CD8-positive, alpha-beta T cell (primary cell): ENCODE measurements at regions of chr14 and their contacts with region 1.

Region 1: GRCh38 chr14:56422703-56423213 is 156.8 kb upstream of the TMEM260 start:
- DNase-seq: peak in 2 of 9 experiments; percentile 29 to 35
- ATAC-seq: no peak
- H3K4me3 ChIP-seq: no peak overlapping the region
- H3K4me3 Mint-ChIP-seq: no peak overlapping the region
- H3K27ac ChIP-seq: no peak overlapping the region
- H3K27ac Mint-ChIP-seq: no peak overlapping the region
- H3K4me1 ChIP-seq: no peaks in the 10 kb centered on the region
- H3K4me1 Mint-ChIP-seq: no peaks in the 10 kb centered on the region
- H3K27me3 ChIP-seq: no peaks in the 10 kb centered on the region
- H3K27me3 Mint-ChIP-seq: peaks cover 2% of the 10 kb centered on the region
- CTCF ChIP-seq: peak; percentile 25

Region 2: DNA sequence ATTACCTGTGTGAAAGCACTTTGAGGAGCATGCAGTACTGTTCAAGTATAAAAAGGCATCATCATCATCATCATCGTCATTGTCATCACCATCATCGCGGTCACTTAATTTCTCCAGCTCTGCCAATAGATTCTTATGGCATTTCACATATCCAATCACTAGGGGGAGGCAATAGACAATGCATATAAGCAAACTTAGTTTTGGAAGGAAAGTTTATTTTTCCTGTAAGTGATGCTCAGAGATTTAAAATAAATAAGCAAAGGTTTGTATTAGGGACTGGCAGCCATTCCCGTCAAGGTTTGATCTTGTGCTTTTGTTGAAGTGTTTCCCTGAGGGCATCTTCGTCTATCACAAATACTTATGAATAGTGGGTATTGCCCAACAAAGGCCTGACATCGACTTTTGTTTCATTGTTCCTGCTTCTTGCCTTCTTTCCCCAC is 715.4 kb before region 1 on chr14:
- CTCF ChIA-PET with region 1: interaction called, 5 read pairs
- POLR2A ChIA-PET with region 1: no interaction called
- intact Hi-C with region 1: loop called in 1 of 2 experiments (anchors 5 kb)
- DNase-seq: peak in 2 of 9 experiments; percentile 25 to 30
- ATAC-seq: no peak
- H3K4me3 ChIP-seq: no peak overlapping the region
- H3K4me3 Mint-ChIP-seq: no peak overlapping the region
- H3K27ac ChIP-seq: no peak overlapping the region
- H3K27ac Mint-ChIP-seq: no peak overlapping the region
- H3K4me1 ChIP-seq: no peaks in the 10 kb centered on the region
- H3K4me1 Mint-ChIP-seq: no peaks in the 10 kb centered on the region
- H3K27me3 ChIP-seq: no peaks in the 10 kb centered on the region
- H3K27me3 Mint-ChIP-seq: no peaks in the 10 kb centered on the region
- CTCF ChIP-seq: no peak

Region 3: GRCh38 chr14:55731881-55732498 is 690.8 kb before region 1 on chr14:
- CTCF ChIA-PET with region 1: interaction called, 4 read pairs
- POLR2A ChIA-PET with region 1: no interaction called
- intact Hi-C with region 1: loop called in 1 of 2 experiments (anchors 2 kb)
- DNase-seq: peak; percentile 18 to 61 (median 56)
- ATAC-seq: no peak
- H3K4me3 ChIP-seq: no peak overlapping the region
- H3K4me3 Mint-ChIP-seq: no peak overlapping the region
- H3K27ac ChIP-seq: no peak overlapping the region
- H3K27ac Mint-ChIP-seq: no peak overlapping the region
- H3K4me1 ChIP-seq: no peaks in the 10 kb centered on the region
- H3K4me1 Mint-ChIP-seq: no peaks in the 10 kb centered on the region
- H3K27me3 ChIP-seq: no peaks in the 10 kb centered on the region
- H3K27me3 Mint-ChIP-seq: no peaks in the 10 kb centered on the region
- CTCF ChIP-seq: peak; percentile 65